ENCODE measurements at regions of chr9 and their contacts with region 1.

Region 1: GRCh38 chr9:100598641-100599145 is 20.8 kb downstream of the CAVIN4 start:
- DNase-seq: peak; percentile 90
- H3K4me3 ChIP-seq: peak overlapping the region; percentile 34 to 47 (median 38)
- H3K27ac ChIP-seq: peak overlapping the region in 3 of 4 donors; percentile 23 to 48 (median 41)
- H3K4me1 ChIP-seq: peaks cover 0 to 8% (median 5%) of the 10 kb centered on the region in 4 donors
- H3K27me3 ChIP-seq: no peaks in the 10 kb centered on the region
- CTCF ChIP-seq: no peak
- EP300 ChIP-seq: no peak
- POLR2A ChIP-seq: no peak

Region 2: GRCh38 chr9:100324594-100325200 is 274.0 kb before region 1 on chr9:
- in situ Hi-C with region 1: loop called in 1 of 4 experiments (anchors 25 kb)
- intact Hi-C with region 1: no loop called
- DNase-seq: no peak
- H3K4me3 ChIP-seq: no peak overlapping the region
- H3K27ac ChIP-seq: no peak overlapping the region
- H3K4me1 ChIP-seq: peaks cover 0 to 6% (median 0%) of the 10 kb centered on the region in 4 donors
- H3K27me3 ChIP-seq: no peaks in the 10 kb centered on the region
- CTCF ChIP-seq: peak; percentile 27 to 54 (median 44)
- EP300 ChIP-seq: no peak
- POLR2A ChIP-seq: no peak

Region 3: DNA sequence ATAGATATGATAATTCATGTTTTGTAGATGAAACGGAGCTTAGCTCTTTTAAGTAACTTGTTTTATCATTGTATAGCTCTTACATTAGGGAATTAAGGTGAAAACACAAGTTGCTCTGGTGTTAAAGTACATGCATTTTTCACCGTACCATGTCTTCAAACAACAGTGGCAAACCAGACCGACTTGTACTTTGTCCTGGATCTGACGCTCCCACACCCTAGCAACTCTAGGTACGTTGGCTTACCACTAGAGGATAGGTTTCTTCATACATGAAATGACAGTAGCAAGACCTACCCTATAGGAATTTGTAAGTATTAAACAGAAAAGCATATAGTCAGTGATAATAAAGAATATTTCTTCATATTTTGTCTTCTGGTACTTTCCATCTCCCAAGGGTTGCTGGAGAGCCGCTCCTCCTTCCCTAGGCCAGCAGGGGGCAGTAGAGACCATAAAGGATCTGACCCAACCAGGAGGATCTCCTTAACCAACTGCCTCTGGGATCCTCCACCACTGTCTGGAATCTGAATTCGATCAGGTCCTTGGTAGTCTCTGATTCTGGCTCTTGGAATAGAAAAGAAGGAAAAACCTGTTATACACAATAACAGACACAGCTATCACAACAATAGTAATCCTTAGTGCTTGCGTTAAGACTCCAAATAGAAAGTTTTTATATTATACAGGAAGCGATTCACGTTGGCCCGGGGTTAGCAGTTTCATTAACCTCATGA is 115.8 kb after region 1 on chr9:
- in situ Hi-C with region 1: no loop called
- intact Hi-C with region 1: no loop called
- DNase-seq: peak; percentile 50
- H3K4me3 ChIP-seq: no peak overlapping the region
- H3K27ac ChIP-seq: no peak overlapping the region
- H3K4me1 ChIP-seq: no peaks in the 10 kb centered on the region
- H3K27me3 ChIP-seq: no peaks in the 10 kb centered on the region
- CTCF ChIP-seq: peak; percentile 50 to 80 (median 63)
- EP300 ChIP-seq: no peak
- POLR2A ChIP-seq: no peak

Region 4: DNA sequence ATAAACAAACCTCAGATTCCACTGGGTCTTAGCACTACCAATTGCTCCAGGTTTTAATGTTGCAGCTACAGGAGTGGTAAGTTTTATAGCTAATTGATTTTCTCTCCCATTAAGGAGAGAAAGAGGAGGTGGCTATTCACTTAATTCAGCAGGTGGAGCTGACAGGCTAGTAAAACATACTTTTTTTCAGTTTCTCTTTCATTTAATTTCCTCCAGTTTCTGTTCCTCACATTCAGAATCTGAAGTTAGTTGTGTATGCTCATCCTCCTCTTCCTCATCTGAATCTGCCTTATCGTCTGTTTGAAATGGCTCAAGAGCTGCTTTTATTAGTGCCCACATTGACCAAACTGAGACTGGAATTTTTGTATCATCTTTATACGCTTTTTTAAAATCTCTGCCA is 527.9 kb after region 1 on chr9:
- in situ Hi-C with region 1: no loop called
- intact Hi-C with region 1: no loop called
- DNase-seq: no peak
- H3K4me3 ChIP-seq: no peak overlapping the region
- H3K27ac ChIP-seq: no peak overlapping the region
- H3K4me1 ChIP-seq: no peaks in the 10 kb centered on the region
- H3K27me3 ChIP-seq: no peaks in the 10 kb centered on the region
- CTCF ChIP-seq: no peak
- EP300 ChIP-seq: no peak
- POLR2A ChIP-seq: no peak